MCF 10A (cell line): ENCODE measurements at regions of chr22 and their contacts with region 1.

Region 1: GRCh38 chr22:24951942-24952836 is at the start of gene KIAA1671:
- DNase-seq: peak; percentile 84
- H3K4me3 Mint-ChIP-seq: peak within 1 kb of the TSS; percentile 85
- H3K27ac Mint-ChIP-seq: peak within 1 kb of the TSS; percentile 94
- H3K4me1 Mint-ChIP-seq: peaks cover 45% of the 10 kb centered on the region
- H3K27me3 Mint-ChIP-seq: no peaks in the 10 kb centered on the region
- CTCF ChIP-seq: peak; percentile 99
- total RNA-seq, gene KIAA1671: 61.0 and 68.1 TPM in 2 replicates

Region 2: DNA sequence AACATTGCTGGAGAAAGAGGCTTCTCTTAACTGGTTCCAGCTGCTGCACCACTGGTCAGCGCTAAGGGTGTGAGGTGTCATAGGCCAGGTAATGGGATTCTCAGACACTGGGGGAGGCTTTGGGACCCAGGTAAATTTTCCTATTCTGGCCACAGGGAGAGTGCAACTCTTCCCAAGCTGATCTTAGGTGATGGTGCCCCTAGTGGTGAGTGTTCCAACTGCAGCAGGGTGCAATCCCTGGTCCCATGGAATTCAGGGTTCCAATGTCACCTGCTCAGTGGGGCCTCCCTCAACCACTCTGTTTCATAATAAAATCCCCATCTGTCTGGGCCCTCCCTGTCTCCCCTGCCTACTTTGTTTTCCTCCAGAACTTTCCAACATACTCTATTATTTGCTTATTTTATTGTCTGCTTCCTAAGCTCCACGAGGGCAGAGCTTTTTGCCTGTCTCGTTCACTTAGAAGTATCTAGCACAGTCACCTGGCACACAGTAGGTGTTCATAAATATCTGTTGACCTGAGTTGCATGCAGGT is 149.1 kb before region 1 on chr22:
- CTCF ChIA-PET with region 1: no interaction called
- POLR2A ChIA-PET with region 1: no interaction called
- intact Hi-C with region 1: no loop called
- DNase-seq: peak; percentile 54
- H3K4me3 Mint-ChIP-seq: no peak overlapping the region
- H3K27ac Mint-ChIP-seq: no peak overlapping the region
- H3K4me1 Mint-ChIP-seq: no peaks in the 10 kb centered on the region
- H3K27me3 Mint-ChIP-seq: peaks cover 28% of the 10 kb centered on the region
- CTCF ChIP-seq: peak; percentile 81

Region 3: DNA sequence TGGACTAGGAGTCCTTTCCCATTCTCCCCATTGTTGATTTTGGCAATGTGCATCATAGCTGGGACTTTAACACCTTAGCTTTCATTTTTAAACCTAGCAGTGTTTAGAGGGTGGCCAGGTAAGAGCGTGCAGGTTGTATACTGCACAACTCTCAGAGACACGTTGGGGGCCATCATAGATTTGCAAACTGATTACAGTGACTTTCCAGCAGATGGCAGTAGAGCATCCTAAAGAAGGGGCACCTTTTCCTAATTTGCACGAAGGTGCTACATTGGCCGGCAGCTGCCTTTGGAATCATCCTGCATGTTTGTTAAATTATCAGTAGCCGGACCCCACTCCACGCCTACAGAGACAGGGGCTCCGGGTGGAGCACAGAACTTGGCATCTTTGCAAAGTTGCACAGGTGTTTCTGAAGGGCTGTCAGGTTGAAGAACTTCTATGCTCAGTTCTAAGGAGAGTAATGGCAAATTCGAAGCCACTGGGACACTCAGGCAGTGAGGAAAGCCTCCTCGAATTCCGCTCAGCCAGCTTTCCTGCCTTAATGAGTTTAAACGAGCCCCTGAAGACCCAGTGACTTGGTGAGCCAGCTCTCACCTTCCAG is 13.3 kb before region 1 on chr22:
- CTCF ChIA-PET with region 1: interaction called, 42 read pairs
- POLR2A ChIA-PET with region 1: interaction called, 4 read pairs
- intact Hi-C with region 1: no loop called
- DNase-seq: peak; percentile 73
- H3K4me3 Mint-ChIP-seq: no peak overlapping the region
- H3K27ac Mint-ChIP-seq: no peak overlapping the region
- H3K4me1 Mint-ChIP-seq: peaks cover 6% of the 10 kb centered on the region
- H3K27me3 Mint-ChIP-seq: no peaks in the 10 kb centered on the region
- CTCF ChIP-seq: peak; percentile 82

Region 4: GRCh38 chr22:24977370-24978221 is 25.4 kb after region 1 on chr22:
- CTCF ChIA-PET with region 1: interaction called, 4 read pairs
- POLR2A ChIA-PET with region 1: interaction called, 14 read pairs
- intact Hi-C with region 1: no loop called
- DNase-seq: peak; percentile 85
- H3K4me3 Mint-ChIP-seq: peak overlapping the region; percentile 50
- H3K27ac Mint-ChIP-seq: peak overlapping the region; percentile 95
- H3K4me1 Mint-ChIP-seq: peaks cover 49% of the 10 kb centered on the region
- H3K27me3 Mint-ChIP-seq: no peaks in the 10 kb centered on the region
- CTCF ChIP-seq: no peak

Region 5: GRCh38 chr22:24996420-24996952 is 44.3 kb after region 1 on chr22:
- CTCF ChIA-PET with region 1: interaction called, 10 read pairs
- POLR2A ChIA-PET with region 1: interaction called, 18 read pairs
- intact Hi-C with region 1: loop called (anchors 2 kb)
- DNase-seq: peak; percentile 58
- H3K4me3 Mint-ChIP-seq: peak overlapping the region; percentile 24
- H3K27ac Mint-ChIP-seq: peak overlapping the region; percentile 73
- H3K4me1 Mint-ChIP-seq: peaks cover 55% of the 10 kb centered on the region
- H3K27me3 Mint-ChIP-seq: no peaks in the 10 kb centered on the region
- CTCF ChIP-seq: no peak

Region 6: DNA sequence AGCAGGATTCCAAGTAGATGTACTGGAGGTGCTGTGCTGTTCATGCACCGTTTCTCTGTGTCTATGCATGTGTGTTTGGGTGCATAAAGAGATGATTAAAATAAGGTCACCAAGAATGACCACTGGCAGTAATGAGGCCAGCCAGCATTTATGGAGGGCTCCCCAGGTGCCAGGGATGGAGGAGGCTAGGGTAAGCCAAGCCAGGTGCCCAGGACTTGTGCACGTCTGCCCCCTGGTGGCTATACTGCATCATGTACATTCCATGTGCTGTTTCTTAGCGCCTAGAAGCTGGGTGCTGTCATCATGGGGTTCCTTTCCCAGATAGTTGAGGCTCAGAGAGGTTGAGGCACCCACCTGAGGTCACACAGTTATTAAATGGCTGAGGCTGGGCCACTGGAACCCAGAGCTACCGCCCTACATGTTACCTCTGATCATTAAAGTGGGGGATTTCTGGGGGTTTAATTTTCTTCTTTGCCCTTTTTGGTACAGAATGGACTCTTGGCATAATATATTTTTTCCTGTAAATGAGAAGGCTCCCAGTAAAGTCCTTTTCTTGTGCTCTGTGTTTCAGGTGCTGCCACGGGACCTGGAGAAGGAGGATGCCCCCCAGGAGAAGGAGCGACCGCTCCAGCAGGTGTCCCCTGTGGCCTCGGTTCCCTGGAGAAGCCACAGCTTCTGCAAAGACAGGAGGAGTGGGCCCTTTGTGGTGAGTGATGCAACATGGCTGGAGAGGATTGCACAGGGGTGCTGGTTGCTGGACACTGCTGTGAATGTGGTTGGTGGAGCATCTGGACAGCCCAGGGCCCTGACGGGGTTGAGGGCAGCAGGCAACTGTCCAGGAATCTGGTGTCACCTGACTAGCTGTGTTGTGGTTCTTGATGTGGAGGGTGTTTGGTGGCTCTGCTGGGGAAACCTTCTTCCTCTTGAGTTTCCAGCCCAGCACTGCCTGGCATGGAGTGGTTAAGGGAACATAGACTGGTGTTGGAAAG is 96.8 kb after region 1 on chr22:
- CTCF ChIA-PET with region 1: interaction called, 87 read pairs
- POLR2A ChIA-PET with region 1: interaction called, 15 read pairs
- intact Hi-C with region 1: loop called (anchors 1 kb)
- DNase-seq: peak; percentile 80
- H3K4me3 Mint-ChIP-seq: no peak overlapping the region
- H3K27ac Mint-ChIP-seq: no peak overlapping the region
- H3K4me1 Mint-ChIP-seq: peaks cover 7% of the 10 kb centered on the region
- H3K27me3 Mint-ChIP-seq: no peaks in the 10 kb centered on the region
- CTCF ChIP-seq: peak; percentile 96